H1 (cell line): ENCODE measurements at regions of chr16 and their contacts with region 1.

Region 1: DNA sequence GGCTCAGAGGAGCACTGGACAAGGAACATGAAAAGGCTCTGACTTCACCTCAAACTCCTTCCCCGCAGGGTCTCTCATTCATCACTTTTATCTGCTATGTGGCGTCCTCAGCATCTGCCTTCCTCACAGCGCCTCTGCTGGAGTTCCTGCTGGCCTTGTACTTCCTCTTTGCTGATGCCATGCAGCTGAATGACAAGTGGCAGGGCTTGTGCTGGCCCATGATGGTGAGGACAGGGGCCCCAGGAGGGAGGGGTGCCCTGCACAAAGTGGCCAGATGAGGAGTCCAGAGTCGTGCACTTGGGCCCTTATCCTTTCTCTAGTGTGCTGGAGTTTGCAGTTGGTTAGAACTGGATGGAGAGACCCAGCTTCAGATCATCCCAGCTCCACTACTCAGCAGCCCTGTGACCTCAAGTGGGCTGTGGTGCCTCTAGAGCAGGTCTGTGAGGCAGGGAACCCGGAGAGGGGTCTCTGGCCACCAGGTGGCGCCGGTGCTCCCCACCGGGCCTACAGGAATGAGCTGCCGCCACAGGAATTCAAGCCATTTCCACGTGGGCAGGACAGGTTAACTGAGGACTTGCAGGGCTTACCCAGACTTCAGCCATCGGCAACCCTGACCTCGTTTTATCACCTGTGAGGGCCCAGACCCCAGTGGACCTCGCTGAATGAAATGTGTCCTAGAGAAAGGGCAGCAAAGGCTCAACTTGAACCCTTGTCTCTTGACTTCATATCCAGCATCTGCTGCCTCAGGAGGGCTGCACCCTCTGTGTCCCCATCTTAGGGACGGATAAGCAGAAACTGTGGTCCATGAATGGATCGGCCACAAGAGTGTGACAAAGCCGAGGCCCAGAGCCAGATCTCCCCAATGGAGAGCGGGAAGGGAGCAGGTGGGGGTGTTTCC is 4.0 kb downstream of the CMTM3 start:
- DNase-seq: peak; percentile 78 to 96
- H3K4me3 ChIP-seq: no peak overlapping the region
- H3K27ac ChIP-seq: no peak overlapping the region
- H3K4me1 ChIP-seq: peaks cover 0 to 27% (median 13%) of the 10 kb centered on the region in 4 experiments; a peak in 6 of 7 replicates
- H3K27me3 ChIP-seq: no peaks in the 10 kb centered on the region
- CTCF ChIP-seq: peak; percentile 79 to 94 (median 92)
- EP300 ChIP-seq: no peak
- POLR2A ChIP-seq: no peak
- RAD21 ChIP-seq: peak; percentile 79 to 81

Region 2: GRCh38 chr16:66562407-66562806 is 46.1 kb before region 1 on chr16:
- CTCF ChIA-PET with region 1: interaction called, 10 read pairs
- POLR2A ChIA-PET with region 1: no interaction called
- DNase-seq: no peak
- H3K4me3 ChIP-seq: no peak overlapping the region
- H3K27ac ChIP-seq: no peak overlapping the region
- H3K4me1 ChIP-seq: no peaks in the 10 kb centered on the region
- H3K27me3 ChIP-seq: no peaks in the 10 kb centered on the region
- CTCF ChIP-seq: no peak
- EP300 ChIP-seq: no peak
- POLR2A ChIP-seq: no peak
- RAD21 ChIP-seq: 0 out of 4 replicates have a peak, but pooled peaks of 1 of the 2 experiments have one; percentile 16

Region 3: GRCh38 chr16:66618588-66619375 is 10.3 kb after region 1 on chr16:
- CTCF ChIA-PET with region 1: interaction called, 44 read pairs
- POLR2A ChIA-PET with region 1: interaction called, 6 read pairs
- DNase-seq: no peak
- H3K4me3 ChIP-seq: no peak overlapping the region
- H3K27ac ChIP-seq: no peak overlapping the region
- H3K4me1 ChIP-seq: peaks cover 3 to 14% (median 7%) of the 10 kb centered on the region in 4 experiments
- H3K27me3 ChIP-seq: no peaks in the 10 kb centered on the region
- CTCF ChIP-seq: no peak
- EP300 ChIP-seq: no peak
- POLR2A ChIP-seq: no peak
- RAD21 ChIP-seq: no peak

Region 4: GRCh38 chr16:66650707-66651473 is 42.4 kb after region 1 on chr16:
- CTCF ChIA-PET with region 1: interaction called, 57 read pairs
- POLR2A ChIA-PET with region 1: no interaction called
- DNase-seq: peak; percentile 68 to 89
- H3K4me3 ChIP-seq: peak overlapping the region in 3 of 4 experiments; percentile 5 to 47 (median 27); a peak in 4 of 8 replicates
- H3K27ac ChIP-seq: no peak overlapping the region
- H3K4me1 ChIP-seq: peaks cover 0 to 5% (median 3%) of the 10 kb centered on the region in 4 experiments; a peak in 3 of 7 replicates
- H3K27me3 ChIP-seq: no peaks in the 10 kb centered on the region
- CTCF ChIP-seq: peak; percentile 80 to 98 (median 96)
- EP300 ChIP-seq: no peak
- POLR2A ChIP-seq: no peak
- RAD21 ChIP-seq: peak; percentile 53 to 69; a peak in 3 of 4 replicates

Region 5: GRCh38 chr16:66696669-66697630 is 88.5 kb after region 1 on chr16 and contains the start of gene CMTM4:
- CTCF ChIA-PET with region 1: interaction called, 7 read pairs
- POLR2A ChIA-PET with region 1: interaction called, 11 read pairs
- DNase-seq: peak in 1 of 2 experiments; percentile 86
- H3K4me3 ChIP-seq: peak within 1 kb of the TSS; percentile 61 to 85 (median 78)
- H3K27ac ChIP-seq: peak within 1 kb of the TSS; percentile 62; the same call in 1 of the 2 replicates
- H3K4me1 ChIP-seq: peaks cover 5 to 13% (median 9%) of the 10 kb centered on the region in 4 experiments
- H3K27me3 ChIP-seq: peaks cover 0 to 1% (median 0%) of the 10 kb centered on the region in 4 experiments; a peak in 1 of 7 replicates
- CTCF ChIP-seq: peak; percentile 16 to 29 (median 29)
- EP300 ChIP-seq: no peak
- POLR2A ChIP-seq: peak; percentile 15 to 73; a peak in 1 of 3 replicates
- RAD21 ChIP-seq: peak in 1 of 2 experiments; percentile 18; a peak in 1 of 4 replicates
- total RNA-seq, gene CMTM4: 49.4 and 51.7 TPM in 2 replicates

Region 6: GRCh38 chr16:66801320-66802105 is 193.0 kb after region 1 on chr16 and contains the start of gene TERB1:
- CTCF ChIA-PET with region 1: no interaction called
- POLR2A ChIA-PET with region 1: no interaction called
- DNase-seq: peak in 1 of 2 experiments; percentile 52
- H3K4me3 ChIP-seq: no peak within 1 kb of the TSS
- H3K27ac ChIP-seq: no peak within 1 kb of the TSS
- H3K4me1 ChIP-seq: no peaks in the 10 kb centered on the region; a peak in 1 of 7 replicates
- H3K27me3 ChIP-seq: no peaks in the 10 kb centered on the region
- CTCF ChIP-seq: no peak
- EP300 ChIP-seq: no peak
- POLR2A ChIP-seq: no peak
- RAD21 ChIP-seq: no peak
- total RNA-seq, gene TERB1: not detected in 2 replicates